ENCODE measurements at regions of chr1 and their contacts with region 1.

Region 1: DNA sequence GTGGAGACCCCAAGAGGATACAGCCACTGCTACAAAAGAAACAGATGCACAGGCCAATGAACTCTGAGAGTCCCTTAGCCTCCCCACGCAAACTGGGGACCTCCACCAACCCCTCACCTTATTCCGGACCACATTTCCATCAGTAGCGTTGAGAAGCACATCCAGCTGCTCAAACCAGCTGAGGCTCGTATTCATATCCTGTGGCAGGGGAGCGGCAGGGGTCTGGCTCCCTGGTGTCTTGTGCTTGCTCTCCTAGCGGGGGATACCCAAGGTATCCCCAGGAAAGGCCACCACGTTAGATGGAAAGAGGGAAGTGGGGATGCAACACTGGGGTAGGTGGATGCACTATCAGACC is 481 bp downstream of the CCDC163 start:
- DNase-seq: no peak
- ATAC-seq: no peak
- H3K4me3 ChIP-seq: peak overlapping the region; percentile 58
- H3K4me3 Mint-ChIP-seq: peak overlapping the region; percentile 94
- H3K27ac ChIP-seq: peak overlapping the region; percentile 46
- H3K27ac Mint-ChIP-seq: peak overlapping the region; percentile 83 to 90
- H3K4me1 ChIP-seq: peaks cover 17% of the 10 kb centered on the region
- H3K4me1 Mint-ChIP-seq: peaks cover 26 to 28% of the 10 kb centered on the region in 2 donors
- H3K27me3 ChIP-seq: no peaks in the 10 kb centered on the region
- H3K27me3 Mint-ChIP-seq: no peaks in the 10 kb centered on the region
- CTCF ChIP-seq: no peak

Region 2: GRCh38 chr1:45550401-45551351 is 51.3 kb after region 1 on chr1 and contains the start of gene AKR1A1:
- intact Hi-C with region 1: loop called (anchors 2 kb)
- DNase-seq: peak; percentile 84 to 94
- ATAC-seq: peak; percentile 93 to 97 (median 94)
- H3K4me3 ChIP-seq: peak within 1 kb of the TSS; percentile 71
- H3K4me3 Mint-ChIP-seq: peak within 1 kb of the TSS; percentile 96
- H3K27ac ChIP-seq: peak within 1 kb of the TSS; percentile 83
- H3K27ac Mint-ChIP-seq: peak within 1 kb of the TSS; percentile 91 to 94
- H3K4me1 ChIP-seq: peaks cover 14% of the 10 kb centered on the region
- H3K4me1 Mint-ChIP-seq: peaks cover 20 to 23% of the 10 kb centered on the region in 2 donors
- H3K27me3 ChIP-seq: no peaks in the 10 kb centered on the region
- H3K27me3 Mint-ChIP-seq: peaks cover 4 to 5% of the 10 kb centered on the region in 2 donors
- CTCF ChIP-seq: no peak
- total RNA-seq, gene AKR1A1: 45.7 to 54.2 (median 53.9) TPM

Measured in natural killer cell (primary cell).